PC-3 (cell line): ENCODE measurements at regions of chr12 and their contacts with region 1.

Region 1: DNA sequence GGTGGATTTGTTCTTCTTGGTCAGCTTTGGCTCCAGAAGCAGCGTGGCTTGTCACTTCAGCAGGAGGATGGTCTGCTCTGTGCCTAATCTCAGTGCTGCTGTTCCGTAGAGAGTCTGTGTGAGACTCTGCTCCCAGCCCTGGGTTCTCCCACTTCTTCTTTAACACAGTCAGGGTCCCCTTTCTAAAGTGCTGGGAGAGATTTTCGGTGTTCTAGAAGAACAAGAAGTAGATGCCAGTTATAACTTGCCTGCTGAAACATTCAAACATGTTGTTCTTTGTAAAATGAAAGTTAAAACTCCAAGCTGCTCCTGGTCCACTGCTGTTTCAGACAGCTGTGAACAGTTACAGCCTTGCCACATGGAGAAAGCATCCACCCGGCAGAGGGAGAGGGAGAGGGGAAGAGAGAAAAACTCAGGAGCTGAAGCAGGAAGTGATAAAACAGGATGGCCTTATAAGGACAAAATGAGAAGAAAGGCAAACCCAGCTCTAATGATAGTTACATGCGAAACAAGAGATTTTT is 55.2 kb upstream of the CERS5 start:
- DNase-seq: peak; percentile 57
- ATAC-seq: peak; percentile 36
- H3K4me3 ChIP-seq: peak overlapping the region; percentile 57
- H3K27ac ChIP-seq: peak overlapping the region; percentile 91
- H3K4me1 ChIP-seq: peaks cover 71% of the 10 kb centered on the region
- H3K27me3 ChIP-seq: no peaks in the 10 kb centered on the region
- CTCF ChIP-seq: peak; percentile 16; the same call in 1 of the 2 replicates

Region 2: DNA sequence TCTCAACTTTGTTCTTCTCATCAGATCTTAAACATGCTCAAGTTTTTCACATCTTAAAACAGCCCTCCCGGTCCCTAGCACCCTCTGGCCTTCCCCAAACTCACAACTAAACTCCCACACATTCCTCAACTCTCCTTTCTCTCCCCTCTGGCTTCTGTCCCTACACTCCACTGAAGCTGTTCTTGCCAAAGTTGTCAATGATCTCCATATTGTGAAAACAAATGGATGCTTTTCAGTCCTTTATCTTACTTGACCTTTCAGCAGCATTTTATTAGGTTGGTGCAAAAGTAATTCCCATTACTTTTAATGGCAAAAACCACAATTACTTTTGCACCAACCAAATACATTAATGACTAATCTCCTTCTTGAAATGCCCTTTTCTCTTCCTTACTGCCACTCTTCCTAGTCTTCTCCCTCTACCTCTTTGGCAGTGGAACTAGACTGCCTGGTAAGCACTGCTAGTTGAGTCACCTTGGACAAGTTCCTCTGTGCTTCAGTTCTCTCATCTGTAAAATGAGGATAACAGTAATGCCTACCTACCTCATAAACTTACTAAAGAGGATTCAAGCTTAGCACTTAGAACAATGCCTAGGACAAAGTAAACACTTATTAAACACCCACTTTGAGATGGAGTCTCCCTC is 71.2 kb before region 1 on chr12:
- CTCF ChIA-PET with region 1: no interaction called
- POLR2A ChIA-PET with region 1: no interaction called
- intact Hi-C with region 1: no loop called
- DNase-seq: peak; percentile 46
- ATAC-seq: peak; percentile 73
- H3K4me3 ChIP-seq: no peak overlapping the region
- H3K27ac ChIP-seq: no peak overlapping the region
- H3K4me1 ChIP-seq: no peaks in the 10 kb centered on the region
- H3K27me3 ChIP-seq: no peaks in the 10 kb centered on the region
- CTCF ChIP-seq: no peak

Region 3: GRCh38 chr12:50187084-50187900 is 35.0 kb before region 1 on chr12:
- CTCF ChIA-PET with region 1: no interaction called
- POLR2A ChIA-PET with region 1: interaction called, 3 read pairs
- intact Hi-C with region 1: loop called (anchors 5 kb)
- DNase-seq: no peak
- ATAC-seq: no peak
- H3K4me3 ChIP-seq: no peak overlapping the region
- H3K27ac ChIP-seq: peak overlapping the region; percentile 2; the same call in 1 of the 2 replicates
- H3K4me1 ChIP-seq: peaks cover 26% of the 10 kb centered on the region
- H3K27me3 ChIP-seq: no peaks in the 10 kb centered on the region
- CTCF ChIP-seq: no peak

Region 4: GRCh38 chr12:50201978-50202521 is 20.3 kb before region 1 on chr12:
- CTCF ChIA-PET with region 1: interaction called, 4 read pairs
- POLR2A ChIA-PET with region 1: no interaction called
- intact Hi-C with region 1: loop called (anchors 2 kb)
- DNase-seq: peak; percentile 97
- ATAC-seq: peak; percentile 92
- H3K4me3 ChIP-seq: peak overlapping the region; percentile 61; the same call in 1 of the 2 replicates
- H3K27ac ChIP-seq: peak overlapping the region; percentile 99
- H3K4me1 ChIP-seq: peaks cover 51% of the 10 kb centered on the region
- H3K27me3 ChIP-seq: no peaks in the 10 kb centered on the region
- CTCF ChIP-seq: no peak

Region 5: DNA sequence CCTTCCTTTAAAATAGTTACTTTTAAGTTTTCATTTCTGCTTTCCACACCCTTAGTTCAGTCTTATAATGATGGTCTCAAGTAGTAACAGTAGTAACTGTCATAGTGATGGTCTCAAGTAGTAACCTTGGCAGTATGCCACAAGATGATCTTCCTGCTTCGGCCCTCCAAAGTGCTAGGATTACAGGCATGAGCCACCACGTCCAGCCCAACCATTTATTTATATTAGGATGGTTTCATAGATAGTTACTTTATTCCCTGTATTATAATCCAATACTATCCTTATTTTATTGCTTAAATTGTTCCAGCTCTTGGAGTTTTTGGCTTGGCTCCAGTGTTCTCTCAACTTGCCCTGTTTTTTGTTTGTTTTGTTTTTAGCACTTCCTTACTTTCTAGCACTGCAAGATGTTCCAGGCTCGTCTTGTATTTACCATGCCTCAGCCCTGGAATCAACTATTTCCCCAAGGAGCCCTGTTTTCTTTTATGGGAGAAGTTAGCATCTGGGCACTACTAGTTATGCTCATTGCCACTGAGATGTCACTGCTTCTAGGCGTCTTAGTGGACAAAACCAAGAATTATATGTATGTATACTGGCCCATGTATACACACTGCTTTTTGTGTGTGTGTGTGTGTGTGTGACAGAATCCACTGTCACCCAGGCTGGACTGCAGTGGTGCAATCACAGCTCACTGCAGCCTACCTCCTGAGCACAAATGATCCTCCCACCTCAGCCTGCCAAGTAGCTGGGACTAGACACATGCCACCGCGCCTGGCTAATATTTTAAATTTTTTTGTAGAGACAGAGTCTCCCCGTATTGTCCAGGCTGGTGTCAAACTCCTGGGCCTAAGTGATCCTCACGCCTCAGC is 35.6 kb after region 1 on chr12:
- CTCF ChIA-PET with region 1: no interaction called
- POLR2A ChIA-PET with region 1: no interaction called
- intact Hi-C with region 1: loop called (anchors 5 kb)
- DNase-seq: peak; percentile 62
- ATAC-seq: peak; percentile 18
- H3K4me3 ChIP-seq: no peak overlapping the region
- H3K27ac ChIP-seq: peak overlapping the region; percentile 60
- H3K4me1 ChIP-seq: peaks cover 82% of the 10 kb centered on the region
- H3K27me3 ChIP-seq: no peaks in the 10 kb centered on the region
- CTCF ChIP-seq: no peak

Region 6: GRCh38 chr12:50351120-50352043 is 129.0 kb after region 1 on chr12:
- CTCF ChIA-PET with region 1: no interaction called
- POLR2A ChIA-PET with region 1: no interaction called
- intact Hi-C with region 1: no loop called
- DNase-seq: no peak
- ATAC-seq: no peak
- H3K4me3 ChIP-seq: no peak overlapping the region
- H3K27ac ChIP-seq: no peak overlapping the region
- H3K4me1 ChIP-seq: peaks cover 5% of the 10 kb centered on the region; the same call in 1 of the 2 replicates
- H3K27me3 ChIP-seq: no peaks in the 10 kb centered on the region
- CTCF ChIP-seq: no peak

Region 7: GRCh38 chr12:50425589-50426258 is 203.4 kb after region 1 on chr12:
- CTCF ChIA-PET with region 1: no interaction called
- POLR2A ChIA-PET with region 1: no interaction called
- intact Hi-C with region 1: no loop called
- DNase-seq: no peak
- ATAC-seq: no peak
- H3K4me3 ChIP-seq: no peak overlapping the region
- H3K27ac ChIP-seq: no peak overlapping the region
- H3K4me1 ChIP-seq: no peaks in the 10 kb centered on the region
- H3K27me3 ChIP-seq: no peaks in the 10 kb centered on the region
- CTCF ChIP-seq: no peak